Right ventricle myocardium superior (tissue), 1 donor: ENCODE measurements at regions of chr1 and their contacts with region 1.

Region 1: DNA sequence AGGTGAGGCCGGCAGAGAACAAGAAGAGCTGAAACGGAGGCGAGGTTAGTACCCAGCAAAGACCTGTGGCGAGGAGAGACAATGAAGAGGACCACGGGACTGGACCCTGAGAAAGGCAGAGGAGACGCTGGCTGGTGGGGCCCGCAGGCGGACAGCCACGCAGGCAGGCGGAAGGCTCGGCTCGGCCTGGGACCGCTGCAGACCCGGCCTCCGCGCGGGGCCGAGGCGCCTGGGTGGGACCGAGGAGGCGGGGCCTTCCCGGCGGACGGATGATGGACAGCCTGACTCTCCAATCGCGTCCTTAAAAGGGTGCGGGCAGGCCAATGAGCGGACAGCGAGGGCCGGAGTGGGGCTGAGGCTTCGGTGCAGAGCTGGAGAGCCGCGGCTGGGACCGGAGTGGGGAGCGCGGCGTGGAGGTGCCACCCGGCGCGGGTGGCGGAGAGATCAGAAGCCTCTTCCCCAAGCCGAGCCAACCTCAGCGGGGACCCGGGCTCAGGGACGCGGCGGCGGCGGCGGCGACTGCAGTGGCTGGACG is at the start of gene MPZL1:
- DNase-seq: peak; percentile 97
- ATAC-seq: peak; percentile 98
- total RNA-seq, gene MPZL1: 34.4 TPM

Region 2: GRCh38 chr1:167538656-167539055 is 183.0 kb before region 1 on chr1:
- intact Hi-C with region 1: no loop called
- DNase-seq: no peak
- ATAC-seq: no peak

Region 3: GRCh38 chr1:167756730-167757405 is 35.2 kb after region 1 on chr1:
- intact Hi-C with region 1: loop called (anchors 5 kb)
- DNase-seq: peak; percentile 57
- ATAC-seq: peak; percentile 91

Region 4: GRCh38 chr1:167803358-167804207 is 81.9 kb after region 1 on chr1:
- intact Hi-C with region 1: loop called (anchors 5 kb)
- DNase-seq: peak; percentile 94
- ATAC-seq: peak; percentile 97

Region 5: GRCh38 chr1:167997037-167997575 is 275.4 kb after region 1 on chr1:
- intact Hi-C with region 1: no loop called
- DNase-seq: no peak
- ATAC-seq: no peak